ENCODE measurements at regions of chr1 and their contacts with region 1.

Region 1: GRCh38 chr1:145858894-145859490 is at the start of gene PIAS3:
- DNase-seq: peak; percentile 93
- H3K4me3 Mint-ChIP-seq: peak within 1 kb of the TSS; percentile 90
- H3K27ac Mint-ChIP-seq: peak within 1 kb of the TSS; percentile 76
- H3K4me1 Mint-ChIP-seq: peaks cover 15% of the 10 kb centered on the region
- H3K27me3 Mint-ChIP-seq: no peaks in the 10 kb centered on the region
- total RNA-seq, gene PIAS3: 17.8 to 17.9 TPM

Region 2: DNA sequence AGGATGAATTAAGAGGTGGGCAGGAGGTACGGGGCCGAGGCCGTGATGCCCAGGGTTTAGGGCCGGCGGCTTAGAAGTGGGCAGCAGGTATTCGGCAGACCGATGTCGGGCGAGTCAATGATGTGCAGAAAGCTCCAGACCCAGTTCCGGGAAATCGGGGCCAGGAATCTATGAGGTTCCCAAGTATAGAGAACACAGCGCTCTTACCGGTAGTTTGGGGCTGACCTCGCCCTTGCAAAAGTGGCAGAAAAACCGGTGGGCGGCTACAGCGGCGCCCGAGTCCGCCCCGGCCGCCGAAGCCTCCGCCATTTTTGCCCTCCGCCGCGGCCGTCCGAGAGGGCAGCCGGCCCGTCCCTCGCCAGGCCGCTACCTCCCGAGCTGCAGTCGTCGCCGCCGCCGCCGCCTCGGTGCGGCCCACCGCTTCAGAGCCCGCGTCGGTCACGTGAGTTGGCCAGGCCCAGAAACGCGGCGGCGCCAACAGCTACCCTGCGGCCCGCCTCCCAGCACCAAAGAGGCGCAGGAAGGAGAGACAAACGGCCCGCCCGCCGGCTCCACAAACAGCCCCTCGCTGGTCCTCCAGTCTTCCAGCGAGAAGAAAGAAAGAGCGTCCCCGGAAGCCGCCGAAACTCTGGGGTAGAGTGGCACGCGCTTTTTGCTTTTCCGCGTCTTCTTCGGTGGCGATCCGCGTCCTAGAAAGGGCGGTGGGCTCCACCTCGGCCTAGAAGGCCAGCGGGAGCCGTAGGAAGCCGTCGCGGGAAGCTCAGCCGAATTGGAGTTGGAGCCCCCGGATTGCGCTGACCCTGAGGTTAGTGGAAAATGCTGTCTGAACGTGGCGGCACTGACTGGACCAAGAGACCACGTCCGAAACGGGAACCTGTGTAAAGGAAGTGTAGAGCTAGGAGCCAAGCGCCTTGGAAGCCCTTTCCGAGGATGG is 35.2 kb before region 1 on chr1 and contains the starts of genes POLR3C and RNF115:
- CTCF ChIA-PET with region 1: interaction called, 4 read pairs
- POLR2A ChIA-PET with region 1: interaction called, 10 read pairs
- intact Hi-C with region 1: no loop called
- DNase-seq: peak; percentile 89
- H3K4me3 Mint-ChIP-seq: peak within 1 kb of the TSS; percentile 96
- H3K27ac Mint-ChIP-seq: peak within 1 kb of the TSS; percentile 95
- H3K4me1 Mint-ChIP-seq: peaks cover 47% of the 10 kb centered on the region
- H3K27me3 Mint-ChIP-seq: no peaks in the 10 kb centered on the region
- total RNA-seq, gene POLR3C: 27.3 to 28.9 TPM
- total RNA-seq, gene RNF115: 10.1 TPM

Region 3: GRCh38 chr1:145885738-145886287 is 26.8 kb after region 1 on chr1 and contains the start of gene ANKRD35:
- CTCF ChIA-PET with region 1: interaction called, 21 read pairs
- POLR2A ChIA-PET with region 1: interaction called, 4 read pairs
- intact Hi-C with region 1: loop called (anchors 1 kb)
- DNase-seq: peak; percentile 92
- H3K4me3 Mint-ChIP-seq: peak within 1 kb of the TSS; percentile 78
- H3K27ac Mint-ChIP-seq: no peak within 1 kb of the TSS
- H3K4me1 Mint-ChIP-seq: peaks cover 19% of the 10 kb centered on the region
- H3K27me3 Mint-ChIP-seq: peaks cover 18% of the 10 kb centered on the region
- total RNA-seq, gene ANKRD35: 0.24 to 0.36 TPM

Region 4: GRCh38 chr1:145918144-145918992 is 59.4 kb after region 1 on chr1 and contains the start of gene PEX11B:
- CTCF ChIA-PET with region 1: no interaction called
- POLR2A ChIA-PET with region 1: interaction called, 15 read pairs
- intact Hi-C with region 1: loop called (anchors 1 kb)
- DNase-seq: peak; percentile 94
- H3K4me3 Mint-ChIP-seq: peak within 1 kb of the TSS; percentile 90
- H3K27ac Mint-ChIP-seq: peak within 1 kb of the TSS; percentile 96
- H3K4me1 Mint-ChIP-seq: peaks cover 45% of the 10 kb centered on the region
- H3K27me3 Mint-ChIP-seq: no peaks in the 10 kb centered on the region
- total RNA-seq, gene PEX11B: 22.8 to 25.6 TPM

Region 5: GRCh38 chr1:145963995-145964901 is 105.3 kb after region 1 on chr1 and contains the starts of genes ANKRD34A and POLR3GL:
- CTCF ChIA-PET with region 1: interaction called, 3 read pairs
- POLR2A ChIA-PET with region 1: interaction called, 10 read pairs
- intact Hi-C with region 1: loop called (anchors 2 kb)
- DNase-seq: peak; percentile 96
- H3K4me3 Mint-ChIP-seq: peak within 1 kb of the TSS; percentile 98
- H3K27ac Mint-ChIP-seq: peak within 1 kb of the TSS; percentile 95
- H3K4me1 Mint-ChIP-seq: peaks cover 31% of the 10 kb centered on the region
- H3K27me3 Mint-ChIP-seq: no peaks in the 10 kb centered on the region
- total RNA-seq, gene ANKRD34A: 4.6 to 4.7 TPM
- total RNA-seq, gene POLR3GL: 27.3 to 30.9 TPM

Region 6: GRCh38 chr1:146036965-146037646 is 178.1 kb after region 1 on chr1:
- CTCF ChIA-PET with region 1: no interaction called
- POLR2A ChIA-PET with region 1: interaction called, 12 read pairs
- intact Hi-C with region 1: loop called (anchors 1 kb)
- DNase-seq: peak; percentile 87
- H3K4me3 Mint-ChIP-seq: peak overlapping the region; percentile 100
- H3K27ac Mint-ChIP-seq: peak overlapping the region; percentile 99
- H3K4me1 Mint-ChIP-seq: peaks cover 32% of the 10 kb centered on the region
- H3K27me3 Mint-ChIP-seq: peaks cover 9% of the 10 kb centered on the region

Measured in activated CD4-positive, alpha-beta memory T cell treated with anti-CD3 and anti-CD28 coated beads for 36 hours (primary cell).